Gastrocnemius medialis (tissue), 4 donors: ENCODE measurements at regions of chr4 and their contacts with region 1.

Region 1: DNA sequence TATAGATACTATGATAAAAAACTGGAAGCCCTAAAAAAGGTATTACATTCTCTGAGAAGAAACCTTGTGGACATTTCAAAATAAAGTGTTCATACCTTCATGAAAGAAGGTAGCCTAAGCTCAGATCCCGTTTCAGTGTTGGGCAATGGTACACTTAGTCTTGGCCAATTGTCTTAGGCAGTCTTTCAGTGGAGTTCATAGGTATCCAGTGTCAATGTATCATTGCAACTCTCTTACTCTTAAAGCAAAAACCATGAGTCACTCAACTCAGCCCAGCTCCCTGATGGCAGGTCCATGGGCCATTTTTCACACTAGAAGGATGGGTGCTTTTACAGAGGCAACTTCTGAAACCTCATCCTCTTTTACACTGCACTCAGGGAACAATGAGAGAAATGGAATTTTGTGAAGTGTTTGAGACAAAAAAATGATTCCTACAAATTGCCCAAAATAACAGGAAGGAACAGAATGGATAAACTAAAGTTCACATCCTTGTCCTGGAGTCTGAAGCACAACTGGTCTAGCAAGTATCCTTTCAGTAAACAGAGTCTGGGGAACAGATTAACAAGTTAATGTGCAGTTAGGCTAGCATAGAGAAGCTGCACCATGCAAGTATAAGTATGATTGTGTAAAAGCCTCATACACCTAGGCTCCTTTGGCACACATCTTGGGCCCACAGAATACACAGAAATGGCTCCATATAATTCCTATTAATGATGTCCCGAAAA is 7.0 kb upstream of the ZNF827 start:
- DNase-seq: peak; percentile 74 to 79
- ATAC-seq: peak; percentile 99 to 100
- H3K4me3 ChIP-seq: peak overlapping the region in 1 of 4 donors; percentile 8
- H3K27ac ChIP-seq: peak overlapping the region; percentile 69 to 84 (median 81)
- H3K4me1 ChIP-seq: peaks cover 18 to 21% of the 10 kb centered on the region in 2 donors
- H3K27me3 ChIP-seq: no peaks in the 10 kb centered on the region
- CTCF ChIP-seq: no peak
- POLR2A ChIP-seq: no peak

Region 2: DNA sequence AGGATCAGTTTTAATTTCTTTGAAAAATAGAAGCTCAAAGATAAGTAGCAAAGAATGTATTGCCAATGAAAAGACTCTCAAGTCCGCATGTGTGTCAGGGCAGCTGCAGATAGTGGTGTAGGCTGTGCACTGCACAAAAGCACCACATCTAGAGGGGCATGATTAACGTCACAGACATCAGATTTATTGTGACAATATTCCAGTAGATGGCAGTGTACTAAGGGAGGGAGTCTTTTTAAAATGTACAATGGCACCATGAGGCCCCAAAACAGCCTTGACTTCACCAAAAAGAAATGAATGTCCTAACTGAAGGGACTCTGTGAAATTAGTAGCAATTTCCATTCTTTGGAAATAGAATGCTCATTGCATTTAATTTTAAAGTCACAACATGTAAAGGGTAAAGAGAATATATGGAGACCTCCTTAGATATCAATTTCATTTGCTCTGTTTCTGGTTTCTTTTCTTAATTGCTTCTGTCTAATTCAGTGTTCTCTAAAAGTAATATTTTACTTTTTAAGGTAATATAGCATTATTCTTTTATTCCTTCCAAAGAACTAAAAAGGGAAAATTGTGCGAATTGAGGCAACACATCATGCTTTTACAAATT is 105.3 kb before region 1 on chr4:
- in situ Hi-C with region 1: no loop called
- intact Hi-C with region 1: loop called (anchors 5 kb)
- DNase-seq: no peak
- ATAC-seq: peak; percentile 46 to 89
- H3K4me3 ChIP-seq: no peak overlapping the region
- H3K27ac ChIP-seq: no peak overlapping the region
- H3K4me1 ChIP-seq: peaks cover 8 to 10% of the 10 kb centered on the region in 2 donors
- H3K27me3 ChIP-seq: no peaks in the 10 kb centered on the region
- CTCF ChIP-seq: peak; percentile 28 to 63 (median 45)
- POLR2A ChIP-seq: no peak

Region 3: GRCh38 chr4:146004730-146005129 is 59.1 kb after region 1 on chr4:
- in situ Hi-C with region 1: no loop called
- intact Hi-C with region 1: no loop called
- DNase-seq: no peak
- ATAC-seq: no peak
- H3K4me3 ChIP-seq: no peak overlapping the region
- H3K27ac ChIP-seq: no peak overlapping the region
- H3K4me1 ChIP-seq: no peaks in the 10 kb centered on the region
- H3K27me3 ChIP-seq: no peaks in the 10 kb centered on the region
- CTCF ChIP-seq: no peak
- POLR2A ChIP-seq: no peak